Activated CD8-positive, alpha-beta memory T cell treated with anti-CD3 and anti-CD28 coated beads, Interleukin-2, amount 10 ng/mL, durations not matched to agents 7 days and 5 days (primary cell): ENCODE measurements at regions of chr14 and their contacts with region 1.

Region 1: DNA sequence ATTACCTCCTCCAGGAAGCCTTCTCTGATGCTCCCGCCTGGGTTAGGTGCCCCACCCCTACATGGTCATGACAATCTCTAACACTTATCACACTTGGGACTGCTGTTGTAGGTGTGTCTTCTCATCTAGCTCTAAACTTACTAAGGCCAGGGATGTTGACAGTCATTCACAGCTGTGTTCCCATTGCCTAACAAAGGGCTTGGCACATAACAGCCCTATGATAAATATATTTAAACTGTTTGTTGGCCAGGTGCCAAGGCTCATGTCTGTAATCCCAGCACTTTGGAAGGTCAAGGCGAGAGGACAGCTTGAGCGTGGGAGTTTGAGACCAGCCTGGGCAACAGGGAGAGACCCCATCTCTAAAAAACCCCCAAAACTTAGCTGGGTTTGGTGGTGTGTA is 98.8 kb upstream of the RGS6 start:
- DNase-seq: no peak
- ATAC-seq: no peak
- H3K4me3 Mint-ChIP-seq: no peak overlapping the region
- H3K27ac Mint-ChIP-seq: no peak overlapping the region
- H3K4me1 Mint-ChIP-seq: no peaks in the 10 kb centered on the region
- H3K27me3 Mint-ChIP-seq: peaks cover 24% of the 10 kb centered on the region

Region 2: DNA sequence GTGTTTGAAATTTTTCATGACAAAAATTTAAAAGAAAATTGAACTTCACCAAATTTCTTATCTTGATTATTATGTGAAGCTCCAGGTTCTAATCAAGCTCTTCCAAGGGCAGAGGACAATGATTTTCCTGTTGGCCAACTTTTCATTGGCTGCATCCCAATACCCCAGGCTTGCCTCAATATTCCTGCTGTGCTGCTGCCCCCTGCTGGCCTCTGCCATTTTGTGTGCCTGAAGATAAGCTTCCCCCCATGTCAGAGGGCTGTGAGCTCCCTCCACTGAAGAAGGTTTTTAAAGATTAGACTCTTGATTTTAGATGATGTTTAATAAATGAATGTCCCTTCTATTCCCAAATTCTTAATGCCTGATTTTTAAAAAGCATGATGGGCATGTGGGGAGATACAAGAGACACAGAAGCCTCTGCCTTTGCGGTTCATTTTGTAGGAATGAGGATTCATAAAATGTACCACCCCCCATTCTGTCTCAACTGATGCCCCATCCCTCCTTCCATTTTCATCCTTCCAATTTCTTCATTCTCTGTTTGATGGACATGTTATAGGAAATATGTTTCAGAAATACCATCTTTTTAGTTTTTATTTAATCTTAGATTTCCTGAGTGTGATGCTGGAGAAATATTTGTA is 22.0 kb after region 1 on chr14:
- CTCF ChIA-PET with region 1: interaction called, 18 read pairs
- DNase-seq: peak; percentile 65
- ATAC-seq: peak; percentile 45
- H3K4me3 Mint-ChIP-seq: no peak overlapping the region
- H3K27ac Mint-ChIP-seq: no peak overlapping the region
- H3K4me1 Mint-ChIP-seq: peaks cover 15% of the 10 kb centered on the region
- H3K27me3 Mint-ChIP-seq: peaks cover 52% of the 10 kb centered on the region